ENCODE measurements at regions of chr5 and their contacts with region 1.

Region 1: GRCh38 chr5:172044631-172045314 is 38.3 kb upstream of the FBXW11 start:
- DNase-seq: no peak
- H3K4me3 ChIP-seq: no peak overlapping the region
- H3K27ac ChIP-seq: no peak overlapping the region
- H3K4me1 ChIP-seq: no peaks in the 10 kb centered on the region
- H3K27me3 ChIP-seq: no peaks in the 10 kb centered on the region
- CTCF ChIP-seq: no peak

Region 2: GRCh38 chr5:171418316-171418981 is 626.3 kb before region 1 on chr5:
- CTCF ChIA-PET with region 1: no interaction called
- dilution Hi-C with region 1: no loop called
- in situ Hi-C with region 1: loop called in 1 of 2 experiments (anchors 25 kb)
- intact Hi-C with region 1: loop called (anchors 5 kb)
- DNase-seq: peak; percentile 70
- H3K4me3 ChIP-seq: peak overlapping the region in 1 of 3 experiments; percentile 31
- H3K27ac ChIP-seq: no peak overlapping the region
- H3K4me1 ChIP-seq: peaks cover 15% of the 10 kb centered on the region
- H3K27me3 ChIP-seq: peaks cover 8% of the 10 kb centered on the region
- CTCF ChIP-seq: peak; percentile 77 to 89

Region 3: GRCh38 chr5:171913987-171914273 is 130.8 kb before region 1 on chr5:
- CTCF ChIA-PET with region 1: no interaction called
- dilution Hi-C with region 1: no loop called
- in situ Hi-C with region 1: loop called (anchors 5 to 10 kb)
- intact Hi-C with region 1: loop called (anchors 1 kb)
- DNase-seq: no peak
- H3K4me3 ChIP-seq: no peak overlapping the region
- H3K27ac ChIP-seq: no peak overlapping the region
- H3K4me1 ChIP-seq: no peaks in the 10 kb centered on the region
- H3K27me3 ChIP-seq: no peaks in the 10 kb centered on the region
- CTCF ChIP-seq: no peak

Region 4: GRCh38 chr5:171989276-171989675 is 55.5 kb before region 1 on chr5:
- CTCF ChIA-PET with region 1: no interaction called
- dilution Hi-C with region 1: no loop called
- in situ Hi-C with region 1: no loop called
- intact Hi-C with region 1: no loop called
- DNase-seq: peak; percentile 81
- H3K4me3 ChIP-seq: no peak overlapping the region
- H3K27ac ChIP-seq: no peak overlapping the region
- H3K4me1 ChIP-seq: peaks cover 11% of the 10 kb centered on the region
- H3K27me3 ChIP-seq: no peaks in the 10 kb centered on the region
- CTCF ChIP-seq: no peak